ENCODE measurements at regions of chr2 and their contacts with region 1.

Region 1: GRCh38 chr2:5365871-5366461 is 326.2 kb upstream of the SOX11 start:
- DNase-seq: peak; percentile 12
- ATAC-seq: peak; percentile 76; the same call in 1 of the 2 replicates
- H3K4me3 ChIP-seq: no peak overlapping the region
- H3K27ac ChIP-seq: no peak overlapping the region
- H3K4me1 ChIP-seq: no peaks in the 10 kb centered on the region
- H3K27me3 ChIP-seq: no peaks in the 10 kb centered on the region
- CTCF ChIP-seq: peak; percentile 84

Region 2: DNA sequence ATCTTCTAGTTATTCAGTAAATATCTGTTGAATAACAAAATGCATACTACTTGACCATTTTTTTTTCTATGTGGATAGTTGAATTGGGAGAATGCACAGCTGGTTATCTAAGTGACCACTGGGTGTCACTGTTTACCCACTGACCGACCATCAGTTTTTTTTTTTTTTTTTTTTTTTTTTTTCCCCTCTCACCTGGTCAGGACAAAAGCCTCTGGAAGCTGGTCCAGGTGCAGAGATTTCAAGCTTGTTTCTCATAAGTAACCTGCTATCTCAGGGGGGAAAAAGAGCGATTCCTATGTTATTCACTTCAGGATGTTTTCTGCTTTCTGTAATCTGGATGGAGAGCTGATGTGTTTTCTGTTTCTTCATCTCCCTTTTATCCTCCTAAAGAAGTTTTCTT is 1406.6 kb before region 1 on chr2:
- CTCF ChIA-PET with region 1: no interaction called
- POLR2A ChIA-PET with region 1: no interaction called
- in situ Hi-C with region 1: no loop called
- intact Hi-C with region 1: loop called (anchors 1 kb)
- DNase-seq: peak; percentile 17
- ATAC-seq: no peak
- H3K4me3 ChIP-seq: no peak overlapping the region
- H3K27ac ChIP-seq: no peak overlapping the region
- H3K4me1 ChIP-seq: peaks cover 3% of the 10 kb centered on the region; the same call in 1 of the 2 replicates
- H3K27me3 ChIP-seq: peaks cover 3% of the 10 kb centered on the region; the same call in 1 of the 2 replicates
- CTCF ChIP-seq: peak; percentile 81

Region 3: GRCh38 chr2:4515871-4516761 is 849.9 kb before region 1 on chr2:
- CTCF ChIA-PET with region 1: no interaction called
- POLR2A ChIA-PET with region 1: no interaction called
- in situ Hi-C with region 1: no loop called
- intact Hi-C with region 1: no loop called
- DNase-seq: no peak
- ATAC-seq: no peak
- H3K4me3 ChIP-seq: no peak overlapping the region
- H3K27ac ChIP-seq: no peak overlapping the region
- H3K4me1 ChIP-seq: no peaks in the 10 kb centered on the region
- H3K27me3 ChIP-seq: no peaks in the 10 kb centered on the region
- CTCF ChIP-seq: no peak

Region 4: DNA sequence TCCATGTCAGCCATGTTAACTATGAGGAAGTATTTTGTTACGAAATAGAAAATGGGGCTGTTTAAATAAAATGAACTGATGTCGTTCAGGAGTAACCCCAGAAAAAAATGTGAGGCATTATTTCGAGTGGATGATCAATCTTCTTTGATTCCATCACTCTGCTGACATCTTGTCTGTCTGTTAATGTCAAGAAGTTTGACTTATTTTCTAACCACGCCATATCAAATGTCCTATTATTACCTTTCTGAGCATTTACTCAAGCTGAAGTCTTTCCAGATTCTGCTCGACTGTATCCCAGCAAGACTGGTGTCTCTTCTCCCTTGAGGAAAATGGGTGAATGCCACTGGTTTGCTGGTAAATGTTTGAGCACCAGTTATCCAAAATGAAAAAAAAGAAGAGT is 346.6 kb before region 1 on chr2:
- CTCF ChIA-PET with region 1: no interaction called
- POLR2A ChIA-PET with region 1: no interaction called
- in situ Hi-C with region 1: no loop called
- intact Hi-C with region 1: loop called (anchors 10 kb)
- DNase-seq: no peak
- ATAC-seq: no peak
- H3K4me3 ChIP-seq: no peak overlapping the region
- H3K27ac ChIP-seq: no peak overlapping the region
- H3K4me1 ChIP-seq: no peaks in the 10 kb centered on the region
- H3K27me3 ChIP-seq: no peaks in the 10 kb centered on the region
- CTCF ChIP-seq: no peak

Measured in Panc1 (cell line).